ENCODE measurements at regions of chr1 and their contacts with region 1.

Region 1: DNA sequence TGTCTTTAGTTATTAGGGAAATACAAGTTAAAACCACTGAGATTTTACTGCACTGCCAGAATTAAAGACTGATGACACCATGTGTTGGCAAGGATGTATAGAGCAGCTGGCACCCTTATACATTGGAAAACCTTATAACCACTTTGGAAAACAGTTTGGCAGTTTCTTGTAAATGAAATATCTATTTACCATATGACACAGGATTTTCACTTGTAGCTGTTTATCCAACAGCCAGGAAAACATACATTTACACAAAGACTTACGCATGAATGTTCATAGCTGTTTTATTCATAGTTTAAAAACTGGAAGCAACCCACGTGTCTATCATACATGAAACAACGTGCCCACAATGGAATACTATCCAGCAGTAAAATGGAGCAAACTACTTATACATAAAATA is 45.3 kb downstream of the PRRC2C start:
- DNase-seq: no peak
- H3K4me3 Mint-ChIP-seq: no peak overlapping the region
- H3K27ac Mint-ChIP-seq: peak overlapping the region; percentile 18
- H3K4me1 Mint-ChIP-seq: peaks cover 4% of the 10 kb centered on the region
- H3K27me3 Mint-ChIP-seq: no peaks in the 10 kb centered on the region

Region 2: GRCh38 chr1:171566467-171566866 is 35.8 kb after region 1 on chr1:
- CTCF ChIA-PET with region 1: interaction called, 3 read pairs
- intact Hi-C with region 1: loop called (anchors 5 kb)
- DNase-seq: no peak
- H3K4me3 Mint-ChIP-seq: no peak overlapping the region
- H3K27ac Mint-ChIP-seq: no peak overlapping the region
- H3K4me1 Mint-ChIP-seq: peaks cover 12% of the 10 kb centered on the region
- H3K27me3 Mint-ChIP-seq: no peaks in the 10 kb centered on the region

Region 3: GRCh38 chr1:171576144-171576543 is 45.5 kb after region 1 on chr1:
- CTCF ChIA-PET with region 1: no interaction called
- intact Hi-C with region 1: loop called (anchors 5 kb)
- DNase-seq: no peak
- H3K4me3 Mint-ChIP-seq: no peak overlapping the region
- H3K27ac Mint-ChIP-seq: no peak overlapping the region
- H3K4me1 Mint-ChIP-seq: peaks cover 13% of the 10 kb centered on the region
- H3K27me3 Mint-ChIP-seq: no peaks in the 10 kb centered on the region